ENCODE measurements at regions of chr11 and their contacts with region 1.

Region 1: DNA sequence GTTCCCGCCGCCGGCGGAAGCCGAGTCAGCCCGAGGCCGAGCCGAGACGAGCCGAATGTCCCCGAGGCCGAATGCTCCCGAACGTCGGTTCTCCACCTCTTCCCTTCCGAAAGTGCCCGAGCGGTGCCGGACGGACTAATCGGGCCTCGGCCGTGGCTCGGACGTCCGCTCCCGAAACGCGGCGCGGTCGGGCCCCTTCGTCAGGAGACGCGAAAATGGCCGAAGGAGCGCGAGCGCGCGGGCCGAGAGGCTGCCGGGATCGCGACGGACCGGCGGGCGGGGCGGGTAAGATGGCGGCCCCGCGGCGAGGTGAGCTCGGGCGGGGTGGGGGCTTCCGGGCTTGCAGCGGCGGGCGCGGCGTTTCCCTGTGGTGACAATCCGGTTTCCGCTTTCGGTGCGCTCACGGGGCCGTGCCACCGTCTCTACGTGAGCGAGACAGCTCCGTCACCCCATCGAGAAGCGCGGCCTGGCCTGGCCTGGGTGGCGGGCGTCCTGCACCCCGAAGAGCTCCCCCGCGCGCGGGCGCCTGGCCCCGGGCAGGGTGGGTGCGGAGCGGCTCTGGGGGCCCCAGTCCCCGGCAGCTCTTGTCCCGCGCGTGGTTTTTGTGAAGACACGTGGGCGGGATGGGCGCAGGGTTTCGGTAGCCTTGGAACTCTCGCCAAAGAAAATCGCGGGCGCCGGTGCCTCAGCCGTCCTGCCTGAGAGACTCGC is at the start of gene TMEM80:
- DNase-seq: peak; percentile 100
- total RNA-seq, gene TMEM80: 15.5 TPM

Region 2: GRCh38 chr11:655036-655726 is 40.5 kb before region 1 on chr11:
- intact Hi-C with region 1: no loop called
- DNase-seq: no peak

Region 3: GRCh38 chr11:747158-748006 is 51.7 kb after region 1 on chr11 and contains the start of gene TALDO1:
- intact Hi-C with region 1: loop called (anchors 1 kb)
- DNase-seq: peak; percentile 97
- total RNA-seq, gene TALDO1: 92.4 TPM